ENCODE measurements at regions of chrX and their contacts with region 1.

Region 1: DNA sequence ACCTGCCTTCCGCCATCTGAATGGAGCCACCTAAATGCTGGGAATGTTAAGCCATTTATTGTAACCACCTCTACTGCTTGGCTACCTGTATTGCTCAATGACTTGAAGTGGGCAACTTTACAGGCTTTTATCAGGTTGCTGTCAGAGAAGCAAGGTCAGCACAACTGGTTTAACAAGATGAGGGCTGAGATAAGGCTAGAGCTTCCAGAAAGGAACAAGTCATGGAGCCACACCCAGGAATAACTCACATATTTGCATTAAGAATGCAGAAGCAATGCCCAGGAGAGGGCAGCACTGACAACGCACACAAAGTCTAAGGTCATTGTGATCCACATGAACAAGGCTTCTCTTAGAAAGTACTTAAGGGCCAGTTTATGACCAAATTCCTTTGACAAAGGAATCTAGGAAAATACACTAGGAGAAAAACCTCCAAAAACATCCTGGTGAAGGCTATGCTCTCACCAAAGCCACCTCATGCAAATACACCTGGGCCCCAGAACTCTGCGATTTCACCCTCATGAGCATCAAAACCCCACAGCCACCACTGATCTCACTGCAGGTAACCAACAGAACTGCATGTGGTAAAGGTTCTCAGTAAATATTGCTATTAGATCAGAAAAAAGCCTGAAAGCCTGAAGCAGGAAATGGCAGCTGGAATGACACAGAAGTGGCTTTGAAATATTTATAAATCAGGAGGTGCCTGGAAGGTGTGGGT is 15.0 kb upstream of the STS start:
- DNase-seq: peak; percentile 88 to 93
- H3K4me3 ChIP-seq: no peak overlapping the region
- H3K4me3 Mint-ChIP-seq: peak overlapping the region; percentile 75
- H3K27ac Mint-ChIP-seq: peak overlapping the region; percentile 100
- H3K4me1 ChIP-seq: peaks cover 49% of the 10 kb centered on the region
- H3K4me1 Mint-ChIP-seq: peaks cover 31% of the 10 kb centered on the region
- H3K27me3 ChIP-seq: no peaks in the 10 kb centered on the region
- H3K27me3 Mint-ChIP-seq: no peaks in the 10 kb centered on the region
- CTCF ChIP-seq: peak; percentile 35 to 55

Region 2: DNA sequence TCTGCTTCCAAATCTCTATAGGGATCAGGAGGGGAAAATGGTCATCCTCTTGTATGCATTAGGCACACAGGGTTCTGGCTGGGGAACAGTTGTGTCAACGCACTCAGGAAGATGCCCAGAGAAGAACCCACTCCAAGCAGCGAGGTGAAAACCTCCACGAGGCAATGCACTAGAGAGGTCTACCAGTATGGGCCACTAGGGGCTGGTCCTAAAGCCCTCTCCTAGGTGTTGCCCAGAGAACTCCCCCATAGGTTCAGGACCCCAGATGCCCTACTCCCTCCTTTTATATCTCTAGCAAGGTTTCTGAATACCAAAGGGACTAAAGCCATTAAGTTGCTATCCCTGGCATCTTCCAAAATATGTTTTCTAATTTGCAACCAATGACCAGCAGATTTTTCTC is 761.1 kb before region 1 on chrX:
- CTCF ChIA-PET with region 1: no interaction called
- POLR2A ChIA-PET with region 1: no interaction called
- intact Hi-C with region 1: loop called (anchors 10 kb)
- DNase-seq: no peak
- H3K4me3 ChIP-seq: no peak overlapping the region
- H3K4me3 Mint-ChIP-seq: no peak overlapping the region
- H3K27ac Mint-ChIP-seq: no peak overlapping the region
- H3K4me1 ChIP-seq: peaks cover 35% of the 10 kb centered on the region
- H3K4me1 Mint-ChIP-seq: peaks cover 13% of the 10 kb centered on the region
- H3K27me3 ChIP-seq: no peaks in the 10 kb centered on the region
- H3K27me3 Mint-ChIP-seq: no peaks in the 10 kb centered on the region
- CTCF ChIP-seq: no peak

Region 3: DNA sequence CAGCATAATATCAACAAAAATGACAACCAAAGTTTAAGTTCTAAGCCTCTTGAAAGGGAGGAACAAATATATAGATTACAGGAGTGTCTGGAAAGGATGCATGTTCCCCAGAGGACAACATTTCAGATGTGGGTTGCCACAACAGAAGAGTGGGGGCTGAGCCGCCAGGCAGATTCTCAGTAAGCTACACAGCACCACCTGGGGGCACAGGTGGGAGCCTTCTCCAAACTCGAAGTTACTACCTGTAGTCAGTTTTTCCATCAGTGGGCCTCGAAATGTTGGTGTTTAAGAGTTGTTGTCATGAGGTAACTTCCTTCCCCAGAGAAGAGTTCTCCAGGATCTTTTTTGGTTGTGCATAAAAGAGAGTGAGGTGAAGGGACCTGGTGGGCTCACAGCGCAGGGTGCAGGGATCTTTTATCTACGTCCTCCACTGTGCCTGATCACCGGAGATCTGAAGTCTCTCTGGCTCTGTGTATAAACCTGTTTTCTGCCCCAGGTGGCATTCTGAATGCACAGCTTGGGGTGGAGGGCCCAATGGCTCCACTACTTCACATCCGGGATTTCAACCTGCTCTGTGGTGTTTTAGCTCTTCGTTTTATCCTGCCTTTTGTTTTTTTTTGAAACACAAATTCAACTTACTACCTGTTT is 43.4 kb before region 1 on chrX:
- CTCF ChIA-PET with region 1: no interaction called
- POLR2A ChIA-PET with region 1: no interaction called
- intact Hi-C with region 1: loop called (anchors 1 kb)
- DNase-seq: peak; percentile 40 to 67
- H3K4me3 ChIP-seq: no peak overlapping the region
- H3K4me3 Mint-ChIP-seq: no peak overlapping the region
- H3K27ac Mint-ChIP-seq: peak overlapping the region; percentile 79
- H3K4me1 ChIP-seq: peaks cover 34% of the 10 kb centered on the region
- H3K4me1 Mint-ChIP-seq: peaks cover 22% of the 10 kb centered on the region
- H3K27me3 ChIP-seq: no peaks in the 10 kb centered on the region
- H3K27me3 Mint-ChIP-seq: no peaks in the 10 kb centered on the region
- CTCF ChIP-seq: peak; percentile 46 to 63

Region 4: GRCh38 chrX:7147978-7148824 is 15.7 kb after region 1 on chrX and contains the start of gene PUDP:
- CTCF ChIA-PET with region 1: interaction called, 3 read pairs
- POLR2A ChIA-PET with region 1: interaction called, 4 read pairs
- intact Hi-C with region 1: loop called (anchors 1 kb)
- DNase-seq: peak; percentile 80 to 87
- H3K4me3 ChIP-seq: peak within 1 kb of the TSS; percentile 87
- H3K4me3 Mint-ChIP-seq: peak within 1 kb of the TSS; percentile 75
- H3K27ac Mint-ChIP-seq: peak within 1 kb of the TSS; percentile 35
- H3K4me1 ChIP-seq: peaks cover 25% of the 10 kb centered on the region
- H3K4me1 Mint-ChIP-seq: peaks cover 10% of the 10 kb centered on the region
- H3K27me3 ChIP-seq: no peaks in the 10 kb centered on the region
- H3K27me3 Mint-ChIP-seq: no peaks in the 10 kb centered on the region
- CTCF ChIP-seq: no peak
- total RNA-seq, gene PUDP: 54.3 and 57.5 TPM in 2 replicates

Region 5: GRCh38 chrX:7219184-7219601 is 86.7 kb after region 1 on chrX:
- CTCF ChIA-PET with region 1: interaction called, 3 read pairs
- POLR2A ChIA-PET with region 1: interaction called, 5 read pairs
- intact Hi-C with region 1: loop called (anchors 1 kb)
- DNase-seq: peak; percentile 58 to 68
- H3K4me3 ChIP-seq: peak overlapping the region; percentile 15; the same call in 1 of the 2 replicates
- H3K4me3 Mint-ChIP-seq: peak overlapping the region; percentile 81
- H3K27ac Mint-ChIP-seq: peak overlapping the region; percentile 94
- H3K4me1 ChIP-seq: peaks cover 29% of the 10 kb centered on the region
- H3K4me1 Mint-ChIP-seq: peaks cover 23% of the 10 kb centered on the region
- H3K27me3 ChIP-seq: no peaks in the 10 kb centered on the region
- H3K27me3 Mint-ChIP-seq: no peaks in the 10 kb centered on the region
- CTCF ChIP-seq: no peak

Region 6: DNA sequence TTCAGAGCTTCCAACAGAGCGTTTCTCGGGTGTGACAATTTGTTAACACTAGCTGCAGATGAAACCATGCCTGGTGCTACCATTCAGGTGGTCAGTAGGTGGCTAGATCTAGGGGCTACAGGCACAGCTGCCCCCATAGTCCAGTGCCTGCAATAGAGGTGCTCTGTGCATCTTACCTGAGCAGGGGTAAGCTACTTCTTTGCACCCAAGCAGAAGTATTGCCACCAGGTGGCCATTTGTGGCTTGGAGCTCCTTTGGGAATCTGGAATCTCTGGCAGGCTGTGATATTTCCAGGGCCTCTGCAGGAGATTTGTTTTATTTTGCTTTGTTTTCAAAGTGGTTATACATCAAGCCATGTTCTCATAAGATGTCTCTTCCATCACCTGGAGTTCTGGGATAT is 186.2 kb after region 1 on chrX:
- CTCF ChIA-PET with region 1: no interaction called
- POLR2A ChIA-PET with region 1: no interaction called
- intact Hi-C with region 1: no loop called
- DNase-seq: peak in 1 of 2 experiments; percentile 1
- H3K4me3 ChIP-seq: no peak overlapping the region
- H3K4me3 Mint-ChIP-seq: no peak overlapping the region
- H3K27ac Mint-ChIP-seq: no peak overlapping the region
- H3K4me1 ChIP-seq: no peaks in the 10 kb centered on the region
- H3K4me1 Mint-ChIP-seq: no peaks in the 10 kb centered on the region
- H3K27me3 ChIP-seq: no peaks in the 10 kb centered on the region
- H3K27me3 Mint-ChIP-seq: no peaks in the 10 kb centered on the region
- CTCF ChIP-seq: peak in 1 of 2 experiments; percentile 24

Measured in Caco-2 (cell line).